GM12878 (cell line): ENCODE measurements at regions of chr6 and their contacts with region 1.

Region 1: GRCh38 chr6:30556066-30556905 is at the start of gene GNL1:
- DNase-seq: peak; percentile 79
- ATAC-seq: peak; percentile 94
- H3K4me3 ChIP-seq: peak within 1 kb of the TSS; percentile 86
- H3K27ac ChIP-seq: peak within 1 kb of the TSS; percentile 93
- H3K4me1 ChIP-seq: peaks cover 8% of the 10 kb centered on the region; the same call in 1 of the 2 replicates
- H3K27me3 ChIP-seq: no peaks in the 10 kb centered on the region
- CTCF ChIP-seq: no peak
- EP300 ChIP-seq: no peak
- POLR2A ChIP-seq: peak; percentile 89
- RAD21 ChIP-seq: no peak
- polyA plus RNA-seq, gene GNL1: 0.18 to 1.4 TPM

Region 2: GRCh38 chr6:30326526-30327260 is 229.6 kb before region 1 on chr6 and contains the start of gene TRIM39:
- CTCF ChIA-PET with region 1: no interaction called
- POLR2A ChIA-PET with region 1: no interaction called
- RAD21 ChIA-PET with region 1: no interaction called
- SMC1A ChIA-PET with region 1: no interaction called
- in situ Hi-C with region 1: no loop called
- intact Hi-C with region 1: loop called (anchors 10 kb)
- DNase-seq: peak; percentile 26
- ATAC-seq: peak; percentile 80
- H3K4me3 ChIP-seq: peak within 1 kb of the TSS; percentile 95
- H3K27ac ChIP-seq: peak within 1 kb of the TSS; percentile 88
- H3K4me1 ChIP-seq: peaks cover 10% of the 10 kb centered on the region
- H3K27me3 ChIP-seq: no peaks in the 10 kb centered on the region
- CTCF ChIP-seq: 0 out of 6 replicates have a peak, but pooled peaks of 1 of the 3 experiments have one; percentile 5
- EP300 ChIP-seq: no peak
- POLR2A ChIP-seq: peak; percentile 90
- RAD21 ChIP-seq: no peak
- polyA plus RNA-seq, gene TRIM39: 3.0 to 3.1 TPM

Region 3: GRCh38 chr6:30344868-30345671 is 211.2 kb before region 1 on chr6 and contains the start of gene RPP21:
- CTCF ChIA-PET with region 1: no interaction called
- POLR2A ChIA-PET with region 1: no interaction called
- RAD21 ChIA-PET with region 1: no interaction called
- SMC1A ChIA-PET with region 1: no interaction called
- in situ Hi-C with region 1: no loop called
- intact Hi-C with region 1: loop called (anchors 5 kb)
- DNase-seq: no peak
- ATAC-seq: peak; percentile 99
- H3K4me3 ChIP-seq: peak within 1 kb of the TSS; percentile 75
- H3K27ac ChIP-seq: peak within 1 kb of the TSS; percentile 66; the same call in 1 of the 2 replicates
- H3K4me1 ChIP-seq: peaks cover 13% of the 10 kb centered on the region
- H3K27me3 ChIP-seq: no peaks in the 10 kb centered on the region
- CTCF ChIP-seq: no peak
- EP300 ChIP-seq: no peak
- POLR2A ChIP-seq: peak; percentile 98
- RAD21 ChIP-seq: no peak
- polyA plus RNA-seq, gene RPP21: 39.3 to 44.3 TPM

Region 4: DNA sequence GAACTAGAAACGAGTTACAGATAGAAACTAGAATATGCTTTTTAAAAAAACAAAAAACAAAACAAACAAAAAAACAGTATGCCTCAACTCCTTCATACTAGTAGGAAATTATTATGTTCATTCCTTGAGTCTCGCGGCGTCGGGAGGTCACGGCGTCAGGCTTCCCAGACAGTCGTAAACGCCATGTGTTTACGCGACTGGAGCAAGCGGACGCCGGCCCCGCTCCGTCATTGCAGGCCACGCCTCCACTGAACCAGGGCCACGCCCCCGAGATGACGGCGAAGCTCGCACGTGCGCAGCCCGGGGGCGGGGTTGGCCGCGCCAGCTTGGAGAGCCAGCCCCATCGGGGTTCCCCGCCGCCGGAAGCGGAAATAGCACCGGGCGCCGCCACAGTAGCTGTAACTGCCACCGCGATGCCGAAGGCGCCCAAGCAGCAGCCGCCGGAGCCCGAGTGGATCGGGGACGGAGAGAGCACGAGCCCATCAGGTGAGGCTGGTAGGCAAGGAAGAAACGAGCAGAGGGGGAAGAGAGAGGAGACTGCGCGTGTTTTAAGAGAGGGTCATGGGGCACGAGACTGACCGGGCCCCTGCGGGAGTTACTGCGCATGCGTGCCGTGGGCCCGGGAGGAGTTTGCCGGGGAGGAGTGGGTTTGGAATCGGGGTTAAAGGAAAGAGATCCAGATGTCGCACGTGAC is 14.9 kb after region 1 on chr6 and contains the start of gene ABCF1:
- CTCF ChIA-PET with region 1: interaction called, 3 read pairs
- POLR2A ChIA-PET with region 1: interaction called, 25 read pairs
- RAD21 ChIA-PET with region 1: interaction called, 9 read pairs
- SMC1A ChIA-PET with region 1: interaction called, 18 read pairs
- in situ Hi-C with region 1: no loop called
- intact Hi-C with region 1: loop called (anchors 2 kb)
- DNase-seq: peak; percentile 85
- ATAC-seq: peak; percentile 94
- H3K4me3 ChIP-seq: peak within 1 kb of the TSS; percentile 89
- H3K27ac ChIP-seq: peak within 1 kb of the TSS; percentile 94
- H3K4me1 ChIP-seq: peaks cover 15% of the 10 kb centered on the region
- H3K27me3 ChIP-seq: no peaks in the 10 kb centered on the region
- CTCF ChIP-seq: no peak
- EP300 ChIP-seq: 0 out of 4 replicates have a peak, but pooled peaks of 1 of the 2 experiments have one; percentile 23
- POLR2A ChIP-seq: peak; percentile 96
- RAD21 ChIP-seq: no peak
- polyA plus RNA-seq, gene ABCF1: 21.3 to 26.1 TPM

Region 5: DNA sequence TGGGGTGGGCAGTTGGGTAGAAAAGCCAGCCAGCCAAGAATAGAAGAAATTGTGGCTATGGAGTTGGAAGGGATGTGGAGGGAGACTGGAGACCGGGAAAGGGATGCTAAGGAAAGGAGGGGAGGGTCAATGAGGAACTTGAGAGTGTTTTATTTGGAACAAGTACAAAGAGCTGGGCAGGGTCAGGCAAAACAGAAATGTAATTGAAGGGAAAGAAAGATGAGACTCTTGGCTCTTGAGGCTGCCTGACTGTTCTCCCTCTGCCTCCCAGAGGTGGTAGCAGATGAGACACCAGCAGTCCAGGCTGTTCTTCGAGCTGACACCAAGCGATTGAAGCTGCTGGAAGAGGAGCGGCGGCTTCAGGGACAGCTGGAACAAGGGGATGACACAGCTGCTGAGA is 27.6 kb after region 1 on chr6:
- CTCF ChIA-PET with region 1: no interaction called
- POLR2A ChIA-PET with region 1: no interaction called
- RAD21 ChIA-PET with region 1: no interaction called
- SMC1A ChIA-PET with region 1: no interaction called
- in situ Hi-C with region 1: no loop called
- intact Hi-C with region 1: no loop called
- DNase-seq: no peak
- ATAC-seq: no peak
- H3K4me3 ChIP-seq: no peak overlapping the region
- H3K27ac ChIP-seq: no peak overlapping the region
- H3K4me1 ChIP-seq: no peaks in the 10 kb centered on the region
- H3K27me3 ChIP-seq: no peaks in the 10 kb centered on the region
- CTCF ChIP-seq: no peak
- EP300 ChIP-seq: no peak
- POLR2A ChIP-seq: no peak
- RAD21 ChIP-seq: no peak